ENCODE measurements at regions of chr22 and their contacts with region 1.

Region 1: GRCh38 chr22:50056214-50056972 is 1.7 kb downstream of the TTLL8 start:
- DNase-seq: no peak
- H3K4me3 ChIP-seq: no peak overlapping the region
- H3K4me3 Mint-ChIP-seq: no peak overlapping the region
- H3K27ac Mint-ChIP-seq: no peak overlapping the region
- H3K4me1 ChIP-seq: peaks cover 7% of the 10 kb centered on the region
- H3K4me1 Mint-ChIP-seq: no peaks in the 10 kb centered on the region
- H3K27me3 ChIP-seq: no peaks in the 10 kb centered on the region
- H3K27me3 Mint-ChIP-seq: no peaks in the 10 kb centered on the region
- CTCF ChIP-seq: no peak

Region 2: DNA sequence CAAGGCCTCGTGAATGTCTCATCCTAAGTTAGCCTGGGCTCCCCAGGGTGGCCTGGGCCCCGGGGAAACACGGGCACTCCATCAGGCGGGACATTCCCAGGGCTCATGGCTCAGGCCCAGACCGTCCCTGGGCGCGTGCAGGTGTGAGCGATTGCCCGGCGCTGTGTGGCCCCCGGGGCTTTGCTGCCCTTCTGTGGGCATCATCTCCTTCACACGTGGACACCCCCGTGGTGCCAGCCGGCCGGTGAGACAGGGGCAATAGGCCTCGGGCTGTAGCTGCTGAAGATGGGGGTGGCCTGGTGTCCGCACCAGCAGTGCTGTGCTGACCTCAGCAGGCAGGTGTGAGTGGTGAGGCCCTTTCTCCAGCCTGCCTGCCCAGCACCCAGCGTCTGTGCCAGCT is 139.9 kb after region 1 on chr22:
- CTCF ChIA-PET with region 1: interaction called, 13 read pairs
- POLR2A ChIA-PET with region 1: no interaction called
- intact Hi-C with region 1: no loop called
- DNase-seq: no peak
- H3K4me3 ChIP-seq: no peak overlapping the region
- H3K4me3 Mint-ChIP-seq: no peak overlapping the region
- H3K27ac Mint-ChIP-seq: no peak overlapping the region
- H3K4me1 ChIP-seq: peaks cover 4% of the 10 kb centered on the region; the same call in 1 of the 2 replicates
- H3K4me1 Mint-ChIP-seq: no peaks in the 10 kb centered on the region
- H3K27me3 ChIP-seq: no peaks in the 10 kb centered on the region
- H3K27me3 Mint-ChIP-seq: no peaks in the 10 kb centered on the region
- CTCF ChIP-seq: no peak

Measured in Caco-2 (cell line).